ENCODE measurements at regions of chr17 and their contacts with region 1.

Region 1: GRCh38 chr17:65100316-65101140 is 36.6 kb upstream of the RGS9 start:
- H3K4me3 ChIP-seq: peak overlapping the region; percentile 60
- H3K27ac ChIP-seq: peak overlapping the region; percentile 27; the same call in 1 of the 2 replicates
- H3K4me1 ChIP-seq: no peaks in the 10 kb centered on the region
- CTCF ChIP-seq: peak; percentile 95

Region 2: GRCh38 chr17:65055348-65056261 is 44.9 kb before region 1 on chr17:
- CTCF ChIA-PET with region 1: interaction called, 4 read pairs
- POLR2A ChIA-PET with region 1: interaction called, 11 read pairs
- H3K4me3 ChIP-seq: peak overlapping the region; percentile 90
- H3K27ac ChIP-seq: peak overlapping the region; percentile 98; the same call in 1 of the 2 replicates
- H3K4me1 ChIP-seq: peaks cover 10% of the 10 kb centered on the region
- CTCF ChIP-seq: no peak

Region 3: DNA sequence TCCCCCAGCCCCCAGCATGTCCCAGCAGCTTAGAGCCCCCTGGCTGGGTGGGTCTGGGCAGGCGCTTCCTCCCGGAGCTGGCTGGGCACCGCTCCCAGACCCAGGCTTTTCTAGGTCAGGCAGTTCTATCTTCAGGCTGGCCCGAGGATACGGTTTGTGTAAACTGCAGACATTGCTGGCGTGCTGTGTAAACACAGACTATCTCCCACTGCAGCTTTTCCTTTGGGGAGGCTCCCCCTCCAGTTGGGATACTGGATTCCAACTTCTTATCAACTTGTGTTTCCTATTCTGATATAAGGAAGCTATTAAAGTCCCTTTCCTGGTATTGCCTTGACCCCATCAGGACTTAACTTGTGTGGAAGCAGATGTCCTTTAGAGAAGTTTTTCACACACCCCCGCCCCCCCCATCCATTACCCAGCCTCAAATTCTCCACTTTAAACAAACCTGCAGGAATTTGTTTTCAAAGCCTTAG is 25.7 kb before region 1 on chr17:
- CTCF ChIA-PET with region 1: interaction called, 18 read pairs
- POLR2A ChIA-PET with region 1: interaction called, 5 read pairs
- H3K4me3 ChIP-seq: no peak overlapping the region
- H3K27ac ChIP-seq: no peak overlapping the region; the same call in 1 of the 2 replicates
- H3K4me1 ChIP-seq: peaks cover 5% of the 10 kb centered on the region; the same call in 1 of the 2 replicates
- CTCF ChIP-seq: no peak

Region 4: DNA sequence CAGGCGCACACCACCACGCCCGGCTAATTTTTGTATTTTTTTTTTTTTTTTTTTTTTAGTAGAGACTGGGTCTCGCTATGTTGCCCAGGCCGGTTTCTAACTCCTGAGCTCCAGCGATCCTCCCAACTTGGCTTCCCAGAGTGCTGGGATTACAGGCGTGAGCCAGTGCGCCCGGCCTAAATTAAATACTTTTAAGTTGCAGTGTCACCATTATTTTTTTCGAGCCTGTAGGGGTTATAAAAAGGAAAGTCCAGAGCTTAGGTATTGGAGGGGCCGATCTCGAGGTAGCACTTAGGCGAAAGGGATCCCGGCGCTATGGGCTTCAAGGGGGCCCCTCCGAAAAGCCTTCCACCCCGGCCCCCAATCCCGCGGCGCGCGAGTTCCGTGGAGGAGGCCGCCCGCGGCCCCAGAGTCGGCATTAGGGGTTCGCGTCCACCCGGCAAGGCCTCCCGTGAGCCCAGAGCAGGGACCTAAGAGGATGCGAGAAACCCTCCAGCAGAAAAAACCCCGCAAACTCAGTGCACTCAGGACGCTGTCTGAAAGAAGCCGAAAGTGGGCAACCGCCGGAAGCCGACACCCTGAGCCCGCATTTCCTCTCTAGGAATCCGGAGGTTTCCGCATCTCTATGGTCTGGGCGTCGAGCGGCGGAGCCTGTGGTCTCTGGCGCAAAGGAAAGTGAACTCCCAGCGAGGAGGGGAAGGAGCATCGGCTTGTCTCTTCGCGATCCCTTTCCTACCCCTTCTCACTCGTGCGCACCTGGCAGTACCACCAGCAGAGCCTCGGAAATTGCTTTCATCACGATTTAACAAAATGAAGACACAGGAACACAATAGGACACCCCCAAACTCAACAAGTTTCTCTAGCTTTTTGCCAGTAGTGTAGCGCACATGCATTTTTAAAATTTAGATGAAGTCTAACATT is 22.6 kb after region 1 on chr17:
- CTCF ChIA-PET with region 1: interaction called, 13 read pairs
- POLR2A ChIA-PET with region 1: interaction called, 3 read pairs
- H3K4me3 ChIP-seq: peak overlapping the region; percentile 61
- H3K27ac ChIP-seq: peak overlapping the region; percentile 4; the same call in 1 of the 2 replicates
- H3K4me1 ChIP-seq: no peaks in the 10 kb centered on the region
- CTCF ChIP-seq: no peak